ENCODE measurements at regions of chr13 and their contacts with region 1.

Region 1: DNA sequence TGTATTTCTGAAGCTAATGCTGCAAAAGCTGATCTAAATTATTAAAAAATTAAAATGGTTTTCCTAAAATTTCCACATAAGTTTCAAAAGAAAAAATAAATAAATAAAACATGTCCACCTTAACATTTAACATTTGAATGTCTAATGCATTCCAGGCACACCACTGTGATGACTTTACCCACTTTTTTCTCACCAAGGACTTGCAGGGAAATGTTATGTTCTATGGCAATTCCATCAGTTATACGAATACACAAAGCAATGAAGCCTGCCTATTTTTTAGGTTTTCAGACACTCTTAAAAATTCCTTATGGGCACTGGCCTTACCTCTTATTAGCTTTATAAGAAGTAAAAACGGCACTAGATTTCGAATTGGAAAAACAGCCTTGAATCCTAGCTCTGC is 10.2 kb downstream of the TSC22D1 start:
- DNase-seq: no peak
- H3K4me3 ChIP-seq: no peak overlapping the region
- H3K27ac ChIP-seq: no peak overlapping the region
- H3K4me1 ChIP-seq: peaks cover 18% of the 10 kb centered on the region
- H3K27me3 ChIP-seq: no peaks in the 10 kb centered on the region
- CTCF ChIP-seq: no peak
- POLR2A ChIP-seq: no peak

Region 2: DNA sequence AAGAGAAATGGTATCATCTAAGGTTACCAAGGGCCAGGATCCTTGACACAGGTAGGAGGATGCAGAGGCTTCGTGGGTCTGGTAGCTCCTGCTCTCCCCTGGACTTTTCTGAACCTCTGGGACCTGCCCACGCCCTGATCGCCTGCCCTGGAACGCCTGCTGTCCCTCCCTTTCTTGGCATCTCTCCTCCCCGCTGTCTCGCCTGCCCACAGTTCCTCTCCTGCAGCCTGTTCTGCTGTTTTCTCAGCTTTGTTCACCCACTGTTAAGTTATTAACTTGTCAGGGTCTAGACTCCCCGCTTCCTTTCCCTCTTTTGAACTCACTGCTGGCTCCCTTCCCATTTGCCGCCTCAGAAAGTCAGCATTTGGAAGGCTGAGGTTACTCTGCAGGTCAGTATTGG is 172.5 kb before region 1 on chr13:
- intact Hi-C with region 1: loop called (anchors 5 kb)
- DNase-seq: no peak
- H3K4me3 ChIP-seq: no peak overlapping the region
- H3K27ac ChIP-seq: no peak overlapping the region
- H3K4me1 ChIP-seq: peaks cover 14% of the 10 kb centered on the region
- H3K27me3 ChIP-seq: no peaks in the 10 kb centered on the region
- CTCF ChIP-seq: no peak
- POLR2A ChIP-seq: no peak